Heart right ventricle (tissue), 16 donors: ENCODE measurements at regions of chr1 and their contacts with region 1.

Region 1: GRCh38 chr1:183318433-183318832 is 99.7 kb downstream of the NMNAT2 start:
- DNase-seq: peak; percentile 73 to 86
- ATAC-seq: peak; percentile 94 to 98 (median 97)
- H3K4me3 ChIP-seq: no peak overlapping the region
- H3K27ac ChIP-seq: peak overlapping the region; percentile 47 to 89 (median 84)
- H3K4me1 ChIP-seq: peaks cover 7 to 35% (median 27%) of the 10 kb centered on the region in 9 donors
- H3K27me3 ChIP-seq: no peaks in the 10 kb centered on the region
- CTCF ChIP-seq: peak; percentile 48 to 90 (median 77)

Region 2: GRCh38 chr1:182955596-182956588 is 362.5 kb before region 1 on chr1:
- intact Hi-C with region 1: loop called in 6 of 10 experiments (anchors 5 to 10 kb)
- DNase-seq: no peak
- ATAC-seq: peak in 5 of 8 donors; percentile 25 to 86 (median 37)
- H3K4me3 ChIP-seq: no peak overlapping the region
- H3K27ac ChIP-seq: no peak overlapping the region
- H3K4me1 ChIP-seq: peaks cover 0 to 14% (median 7%) of the 10 kb centered on the region in 9 donors
- H3K27me3 ChIP-seq: peaks cover 3 to 28% (median 17%) of the 10 kb centered on the region in 7 donors
- CTCF ChIP-seq: no peak

Region 3: DNA sequence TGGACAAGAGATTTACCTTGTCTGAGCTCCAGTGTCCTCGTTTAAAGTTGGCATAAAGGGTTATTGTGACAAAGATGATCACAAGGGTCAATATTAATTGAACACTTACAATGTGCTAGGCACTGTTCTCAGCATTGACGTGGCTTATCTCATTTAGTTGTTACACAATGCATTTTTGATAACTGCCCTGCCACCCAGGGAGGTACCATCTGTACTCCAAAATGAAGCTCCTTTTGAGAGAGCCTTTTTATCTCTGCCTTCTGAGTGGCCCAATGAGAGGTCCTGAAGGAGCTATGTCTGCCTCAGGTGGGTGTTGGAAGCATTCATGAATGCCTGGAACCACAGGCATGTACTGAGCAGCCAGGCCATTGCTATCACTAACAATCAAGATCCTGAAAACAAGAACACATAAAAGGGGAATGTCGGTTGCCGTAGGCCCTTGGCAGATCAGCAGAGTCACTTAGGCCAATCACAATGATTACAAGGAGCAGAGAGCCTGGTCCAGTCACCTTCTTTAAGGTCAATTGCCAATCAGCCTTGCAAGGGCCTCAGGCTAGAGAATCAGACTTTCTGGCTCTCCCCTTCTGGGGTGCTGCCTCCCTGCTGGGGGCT is 21.2 kb after region 1 on chr1:
- intact Hi-C with region 1: loop called in 1 of 10 experiments (anchors 1 kb)
- DNase-seq: no peak
- ATAC-seq: peak in 1 of 8 donors; percentile 22
- H3K4me3 ChIP-seq: no peak overlapping the region
- H3K27ac ChIP-seq: no peak overlapping the region
- H3K4me1 ChIP-seq: no peaks in the 10 kb centered on the region
- H3K27me3 ChIP-seq: no peaks in the 10 kb centered on the region
- CTCF ChIP-seq: no peak